HAP-1 (cell line): ENCODE measurements at regions of chr12 and their contacts with region 1.

Region 1: DNA sequence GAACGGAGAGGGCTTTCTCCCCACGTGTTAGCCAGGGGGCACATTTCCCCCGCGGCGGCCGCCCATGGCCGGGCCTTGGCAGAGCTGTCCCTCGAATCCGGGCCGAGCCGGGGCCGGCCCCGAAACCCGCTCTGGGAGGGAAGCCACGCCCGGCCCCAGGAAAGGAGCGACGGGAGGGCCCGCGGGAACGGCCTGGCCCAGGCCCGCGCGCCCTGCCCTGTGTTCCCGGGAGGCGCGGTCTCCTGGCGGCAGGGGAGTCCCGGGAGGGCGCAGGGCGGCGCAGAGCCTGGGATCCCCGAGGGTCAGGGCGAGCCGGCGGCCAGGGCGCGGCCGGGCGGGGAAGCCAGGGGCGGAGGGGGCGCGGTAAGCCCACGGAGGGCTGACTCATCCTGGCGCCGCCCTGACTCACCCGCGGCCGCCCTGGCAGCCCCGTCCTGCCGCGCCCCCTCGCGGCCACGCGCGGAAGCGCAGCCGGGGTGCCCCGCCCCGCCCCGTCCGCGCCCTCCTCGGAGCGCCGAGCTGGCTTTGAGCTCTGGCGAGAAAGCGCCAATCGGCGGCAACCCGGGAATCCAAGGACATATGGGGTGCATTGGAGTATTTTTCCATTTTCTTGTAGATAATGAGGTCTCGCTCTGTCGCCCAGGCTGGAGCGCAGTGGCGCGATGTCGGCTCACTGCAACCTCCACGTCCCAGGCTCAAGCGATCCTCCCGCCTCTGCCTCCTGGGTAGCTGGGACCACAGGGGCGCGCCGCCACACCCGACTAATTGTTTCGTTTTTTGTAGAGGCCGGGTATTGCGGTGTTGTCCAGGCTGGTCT is 31.8 kb upstream of the PLEKHG6 start:
- DNase-seq: peak; percentile 73 to 86
- H3K4me3 ChIP-seq: peak overlapping the region; percentile 28
- H3K4me1 ChIP-seq: peaks cover 8% of the 10 kb centered on the region
- H3K27me3 ChIP-seq: no peaks in the 10 kb centered on the region

Region 2: DNA sequence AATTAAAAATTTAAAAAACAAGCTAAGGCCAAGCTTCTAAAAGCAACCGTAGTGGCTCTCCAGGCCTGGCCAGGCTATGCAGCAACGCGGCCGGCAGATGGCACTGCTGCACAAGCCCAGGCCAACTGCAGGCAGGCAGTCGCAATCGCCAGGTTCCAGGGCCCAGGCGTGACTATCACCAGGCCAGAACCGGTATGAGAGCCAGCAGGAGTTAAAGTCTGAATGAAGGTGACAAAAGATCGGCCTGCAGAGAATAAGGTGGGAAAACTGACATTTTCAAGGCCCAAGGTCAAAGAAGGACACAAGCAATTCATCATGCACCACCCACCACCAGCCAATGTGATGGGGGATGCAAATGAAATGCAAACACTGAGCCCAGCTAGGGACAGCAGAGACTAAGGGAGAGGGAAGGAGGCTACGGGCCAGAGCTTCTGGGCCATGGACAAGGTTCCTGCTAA is 290.0 kb before region 1 on chr12:
- in situ Hi-C with region 1: loop called (anchors 5 kb)
- DNase-seq: peak; percentile 68 to 83
- H3K4me3 ChIP-seq: no peak overlapping the region
- H3K4me1 ChIP-seq: peaks cover 4% of the 10 kb centered on the region; the same call in 1 of the 2 replicates
- H3K27me3 ChIP-seq: peaks cover 3% of the 10 kb centered on the region; the same call in 1 of the 2 replicates

Region 3: DNA sequence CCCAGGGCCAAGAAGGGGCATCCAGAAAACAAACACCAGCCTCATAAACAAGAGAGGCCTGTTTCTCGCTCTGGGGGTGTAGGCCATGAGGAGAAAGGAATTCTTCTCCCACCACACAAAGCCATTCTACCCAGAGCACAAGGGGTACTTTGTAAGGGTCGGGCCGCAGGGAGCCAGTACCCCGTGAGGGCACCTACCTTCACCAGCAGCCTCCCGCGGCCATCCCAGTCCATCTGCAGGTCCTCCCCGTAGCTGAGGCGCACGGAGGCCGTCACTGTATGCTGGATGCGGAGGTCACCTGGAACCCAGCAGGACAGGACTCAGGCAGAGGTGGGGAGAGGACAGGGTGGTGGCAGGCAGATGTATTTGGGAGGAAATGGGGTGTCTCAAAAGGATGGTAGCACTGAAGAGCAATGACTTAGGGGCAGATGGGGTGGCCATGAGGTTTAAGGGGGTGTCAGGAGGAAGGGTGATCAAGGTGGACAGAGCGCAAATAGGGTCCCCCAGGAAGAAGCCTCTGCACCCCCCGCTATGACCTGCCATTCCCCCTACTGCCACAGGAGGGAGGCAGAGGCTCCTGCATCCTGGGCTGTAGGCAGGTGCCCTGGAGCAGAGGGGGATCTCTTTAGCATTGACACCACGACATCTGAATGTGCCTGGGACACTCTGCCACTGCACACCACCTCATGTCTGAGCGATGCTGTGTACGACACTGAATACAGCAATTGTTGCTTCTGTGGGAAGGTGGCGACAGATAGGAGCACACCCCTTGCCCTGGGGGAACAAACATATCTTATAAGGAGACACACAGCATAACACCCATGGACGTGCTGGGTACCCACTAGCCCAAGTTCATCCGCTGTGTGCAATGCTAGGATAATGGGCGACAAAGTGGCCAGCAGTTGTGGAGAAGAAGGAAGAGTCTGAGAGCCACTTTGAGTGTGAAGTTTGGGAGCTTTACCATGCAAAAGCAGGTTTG is 215.6 kb before region 1 on chr12:
- in situ Hi-C with region 1: loop called (anchors 5 kb)
- DNase-seq: peak in 1 of 2 experiments; percentile 72
- H3K4me3 ChIP-seq: no peak overlapping the region
- H3K4me1 ChIP-seq: no peaks in the 10 kb centered on the region
- H3K27me3 ChIP-seq: no peaks in the 10 kb centered on the region

Region 4: DNA sequence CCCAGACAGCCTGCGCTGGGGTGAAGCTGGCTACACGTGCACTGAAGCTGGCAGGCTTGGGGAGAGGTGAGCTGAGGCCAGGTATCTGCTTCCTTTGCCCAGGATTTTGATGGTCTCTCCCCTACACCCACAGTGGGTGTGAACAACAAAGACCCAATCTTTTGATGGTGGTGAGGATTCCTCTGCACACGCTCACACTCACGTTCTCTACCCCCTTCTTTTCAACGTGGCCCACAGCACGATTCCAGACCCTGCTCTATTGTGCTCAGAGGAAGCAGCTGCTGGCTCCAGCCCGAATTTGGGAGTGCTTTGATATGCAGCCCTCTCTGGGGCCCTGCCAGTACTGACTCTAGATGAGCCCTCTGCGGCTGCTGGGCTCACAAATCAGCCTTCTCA is 73.5 kb before region 1 on chr12:
- in situ Hi-C with region 1: loop called (anchors 5 kb)
- DNase-seq: peak in 1 of 2 experiments; percentile 64
- H3K4me3 ChIP-seq: no peak overlapping the region
- H3K4me1 ChIP-seq: peaks cover 24% of the 10 kb centered on the region
- H3K27me3 ChIP-seq: no peaks in the 10 kb centered on the region